AG04449 (cell line): ENCODE measurements at regions of chr1 and their contacts with region 1.

Region 1: DNA sequence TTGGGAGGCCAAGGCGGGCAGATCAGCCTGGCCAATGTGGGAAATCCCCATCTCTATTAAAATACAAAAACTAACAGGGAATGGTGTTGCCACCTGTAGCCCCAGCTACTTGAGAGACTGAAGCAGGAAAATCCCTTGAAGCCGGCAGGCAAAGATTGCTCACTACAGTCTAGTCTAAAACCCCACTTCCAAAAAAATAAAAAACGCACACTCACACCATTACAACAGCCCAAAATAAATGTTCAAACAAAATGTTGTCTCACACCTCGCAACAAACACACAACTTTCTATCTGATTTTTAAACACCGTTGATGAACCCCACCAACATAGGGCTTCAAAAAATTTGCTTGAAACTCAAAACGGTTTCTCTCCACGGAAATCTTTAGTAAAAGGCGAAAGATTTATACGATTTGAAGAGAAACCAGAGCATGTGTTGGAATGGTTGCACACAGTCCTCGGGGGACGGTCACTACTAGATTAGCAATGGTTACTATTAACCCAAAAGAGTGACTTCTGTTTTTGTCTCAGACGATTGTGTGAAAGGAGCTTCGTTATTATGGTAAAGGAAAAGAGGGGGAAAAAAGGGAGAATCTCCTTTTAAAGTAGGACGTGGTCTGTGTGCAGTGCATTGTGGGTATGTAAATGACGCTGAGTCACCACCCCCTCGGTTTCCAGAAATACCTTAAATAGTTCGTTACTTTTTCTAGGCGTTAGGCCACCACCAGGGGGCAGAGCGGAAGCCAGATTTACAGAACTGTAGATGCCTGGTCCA is at the start of gene RNU5D-1:
- DNase-seq: peak; percentile 90
- H3K4me3 ChIP-seq: peak within 1 kb of the TSS; percentile 46
- CTCF ChIP-seq: peak; percentile 72

Region 2: GRCh38 chr1:44707959-44708831 is 22.7 kb before region 1 on chr1:
- CTCF ChIA-PET with region 1: interaction called, 217 read pairs
- POLR2A ChIA-PET with region 1: interaction called, 4 read pairs
- DNase-seq: no peak
- H3K4me3 ChIP-seq: no peak overlapping the region
- CTCF ChIP-seq: peak; percentile 33

Region 3: GRCh38 chr1:44747878-44748277 is 17.0 kb after region 1 on chr1:
- CTCF ChIA-PET with region 1: interaction called, 30 read pairs
- POLR2A ChIA-PET with region 1: no interaction called
- DNase-seq: no peak
- H3K4me3 ChIP-seq: no peak overlapping the region
- CTCF ChIP-seq: no peak

Region 4: DNA sequence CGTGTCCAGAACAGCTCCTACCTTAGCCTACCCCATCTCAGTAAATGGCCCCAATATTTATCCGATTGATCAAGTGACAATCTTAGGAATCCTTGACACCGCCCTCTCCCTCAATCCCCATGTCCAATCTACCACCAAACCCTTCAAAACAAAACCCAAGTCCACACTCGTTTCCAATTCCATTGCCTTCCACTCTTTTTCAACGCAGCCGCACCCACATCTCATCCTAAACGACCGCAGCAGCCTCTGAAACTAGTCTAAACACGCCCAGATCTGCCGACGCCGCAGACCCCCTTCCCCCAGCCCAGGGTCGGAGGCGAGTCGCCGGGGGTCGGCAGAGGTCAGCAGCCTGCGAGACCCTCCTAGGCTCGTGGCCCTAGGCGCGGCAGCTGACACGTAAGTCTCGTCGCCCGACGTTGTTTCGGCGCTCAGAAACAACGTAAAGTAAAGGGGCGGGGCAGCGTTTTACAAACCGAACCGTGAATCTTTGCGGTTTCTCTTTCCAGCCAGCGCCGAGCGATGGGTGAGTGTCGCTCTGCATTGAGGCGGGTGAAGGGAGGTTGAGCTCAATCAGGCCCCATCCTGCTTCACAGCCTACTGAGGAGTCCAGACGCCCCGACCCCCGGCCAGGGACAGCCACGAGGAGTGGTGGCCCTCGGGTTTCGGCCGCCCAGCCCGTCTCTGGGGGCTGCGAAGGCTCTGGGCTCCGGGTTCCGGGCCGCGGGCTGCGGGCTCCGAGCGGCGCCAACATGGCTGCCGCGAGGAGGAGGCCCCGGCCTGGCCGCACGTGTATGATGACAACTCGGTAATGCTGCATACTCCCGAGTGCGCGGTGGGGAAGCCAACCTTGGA is 44.4 kb after region 1 on chr1 and contains the start of gene RPS8:
- CTCF ChIA-PET with region 1: interaction called, 15 read pairs
- POLR2A ChIA-PET with region 1: interaction called, 20 read pairs
- DNase-seq: peak; percentile 54
- H3K4me3 ChIP-seq: peak within 1 kb of the TSS; percentile 94
- CTCF ChIP-seq: no peak

Region 5: DNA sequence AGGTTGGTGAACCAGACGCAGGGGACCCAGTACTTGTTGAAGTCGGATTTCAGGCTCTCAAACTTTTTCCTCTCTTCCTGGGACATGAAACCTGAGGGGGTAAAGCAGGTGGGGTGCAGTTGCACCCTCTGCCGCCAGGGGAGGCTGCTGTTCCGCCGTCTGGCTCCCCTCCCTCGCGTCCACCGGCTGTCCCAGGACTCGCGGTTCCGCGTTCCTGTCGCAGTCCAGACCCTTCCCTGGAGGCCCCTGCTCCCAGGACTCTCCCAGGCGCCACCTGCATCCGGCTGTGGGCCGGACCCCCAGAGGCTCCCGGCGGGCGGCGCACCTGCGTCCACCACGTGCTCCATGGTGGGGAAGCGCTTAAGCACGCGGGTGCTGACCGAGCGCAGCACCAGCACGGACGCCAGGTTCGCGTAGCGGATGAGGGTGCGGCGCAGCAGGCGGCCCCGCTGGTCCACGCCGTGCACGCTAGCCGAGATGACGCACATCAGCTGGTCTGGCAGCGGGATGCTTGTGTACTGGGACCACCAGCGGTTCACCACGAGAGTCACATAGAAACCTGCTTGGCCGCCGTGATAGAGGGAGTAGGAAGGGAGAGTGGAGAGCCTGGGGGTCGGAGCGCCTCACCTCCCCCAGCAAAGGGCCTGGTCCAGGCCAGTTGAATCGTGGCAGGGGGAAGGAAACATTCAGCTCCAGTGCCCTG is 55.4 kb after region 1 on chr1:
- CTCF ChIA-PET with region 1: interaction called, 30 read pairs
- POLR2A ChIA-PET with region 1: no interaction called
- DNase-seq: no peak
- H3K4me3 ChIP-seq: peak overlapping the region; percentile 50
- CTCF ChIP-seq: peak; percentile 96

Region 6: GRCh38 chr1:44807262-44808062 is 76.5 kb after region 1 on chr1 and contains the start of gene DYNLT4:
- CTCF ChIA-PET with region 1: interaction called, 13 read pairs
- POLR2A ChIA-PET with region 1: interaction called, 8 read pairs
- DNase-seq: peak; percentile 98
- H3K4me3 ChIP-seq: peak within 1 kb of the TSS; percentile 33
- CTCF ChIP-seq: no peak

Region 7: DNA sequence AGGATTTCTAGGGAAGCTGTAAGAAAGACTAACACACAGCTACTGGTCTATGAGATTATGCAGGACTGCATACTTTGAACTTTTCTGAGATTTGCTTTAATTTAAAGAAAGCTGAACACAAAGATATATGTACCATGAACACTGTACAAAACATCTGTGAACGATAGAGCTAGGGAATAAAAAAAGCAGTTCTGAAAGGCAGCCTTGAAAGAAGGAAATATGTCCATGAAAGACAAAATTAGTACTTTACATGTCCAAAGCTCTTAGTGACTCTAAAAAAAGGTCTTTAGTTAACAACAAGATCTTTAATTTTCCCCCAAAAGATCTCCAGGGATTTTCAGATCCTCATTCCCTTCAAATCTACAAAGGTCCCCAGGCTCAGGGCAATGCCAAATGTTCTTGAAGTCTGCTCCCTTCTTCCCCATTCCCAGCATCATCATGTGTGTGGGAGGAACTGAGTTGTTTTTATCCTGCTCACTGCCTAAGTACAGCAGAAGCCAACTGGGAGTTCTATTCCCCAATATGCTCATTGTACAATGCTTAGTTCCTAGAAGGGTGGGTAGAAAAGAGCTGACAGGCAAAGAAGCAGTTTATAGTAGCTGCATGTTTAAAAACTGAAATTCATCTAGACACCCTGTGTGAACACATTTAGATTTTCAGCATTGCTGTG is 172.2 kb after region 1 on chr1:
- CTCF ChIA-PET with region 1: no interaction called
- POLR2A ChIA-PET with region 1: no interaction called
- DNase-seq: no peak
- H3K4me3 ChIP-seq: no peak overlapping the region
- CTCF ChIP-seq: no peak